A673 (cell line): ENCODE measurements at regions of chrX and their contacts with region 1.

Region 1: DNA sequence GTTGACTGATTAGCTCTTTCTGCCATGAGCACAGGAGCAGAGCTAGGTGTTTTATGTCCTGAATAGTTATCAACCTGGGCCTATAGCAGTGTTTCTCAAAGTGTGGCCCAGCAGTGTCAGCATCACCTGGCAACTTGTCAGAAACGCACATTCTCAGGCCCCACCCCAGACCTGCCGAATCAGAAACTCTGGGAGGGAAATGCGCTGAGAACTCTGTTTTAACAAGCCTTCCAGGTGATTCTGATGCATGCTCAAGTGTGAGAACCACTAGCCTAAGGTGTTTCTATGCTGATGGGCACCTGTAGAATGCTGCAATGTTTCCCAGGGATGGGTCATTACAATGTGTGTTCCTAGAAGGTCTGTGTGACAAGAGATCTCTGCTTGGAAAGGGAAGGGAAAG is 257.5 kb downstream of the MID1IP1 start:
- DNase-seq: no peak
- H3K4me3 ChIP-seq: no peak overlapping the region
- H3K27ac ChIP-seq: no peak overlapping the region
- H3K4me1 ChIP-seq: no peaks in the 10 kb centered on the region
- H3K27me3 ChIP-seq: no peaks in the 10 kb centered on the region
- CTCF ChIP-seq: no peak

Region 2: GRCh38 chrX:40420899-40421729 is 1362.4 kb after region 1 on chrX:
- CTCF ChIA-PET with region 1: no interaction called
- POLR2A ChIA-PET with region 1: no interaction called
- intact Hi-C with region 1: loop called (anchors 5 kb)
- DNase-seq: no peak
- H3K4me3 ChIP-seq: no peak overlapping the region
- H3K27ac ChIP-seq: no peak overlapping the region
- H3K4me1 ChIP-seq: peaks cover 5% of the 10 kb centered on the region
- H3K27me3 ChIP-seq: no peaks in the 10 kb centered on the region
- CTCF ChIP-seq: no peak